ENCODE measurements at regions of chr2 and their contacts with region 1.

Region 1: DNA sequence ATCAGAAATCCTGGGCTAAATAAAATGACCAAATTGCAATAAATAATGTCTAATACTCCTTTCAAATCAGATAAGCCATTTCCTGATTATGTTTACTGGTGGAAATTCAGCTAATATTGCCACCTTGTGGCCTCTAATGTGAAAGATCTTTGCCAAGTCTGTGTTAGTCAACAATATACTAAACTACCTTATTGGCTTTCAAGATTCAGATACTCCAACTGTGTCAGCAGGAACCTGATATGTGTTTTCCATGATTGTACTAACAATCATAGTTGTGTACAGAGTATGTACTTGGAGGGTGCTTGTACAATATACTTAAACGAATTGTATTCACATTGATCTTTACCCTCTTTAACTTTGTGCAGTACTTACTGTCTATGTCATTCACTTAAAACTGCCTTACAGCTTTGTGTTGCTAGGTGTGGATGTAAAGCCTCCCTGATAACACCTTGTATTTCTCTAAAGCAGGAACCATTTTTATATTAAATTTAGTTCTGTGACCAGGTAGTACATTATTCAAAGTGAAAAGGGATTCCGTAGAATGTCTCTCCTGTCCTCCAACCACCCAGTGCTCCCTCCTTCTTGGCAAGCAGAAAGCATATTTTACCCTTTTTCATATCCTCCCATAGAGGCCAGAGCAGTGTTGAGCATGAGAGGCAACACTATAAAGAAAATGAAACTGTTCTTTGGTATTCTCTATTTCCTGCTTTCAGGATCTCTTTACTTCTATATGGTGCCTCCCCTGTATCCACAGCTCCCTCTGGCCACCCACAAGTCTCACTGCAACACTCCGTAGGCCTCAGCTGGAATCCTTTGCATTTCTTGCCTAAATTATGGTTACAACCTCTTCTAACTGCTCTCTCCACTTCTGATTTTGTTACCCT is 75.2 kb upstream of the C2orf15 start:
- DNase-seq: peak; percentile 68
- H3K4me3 Mint-ChIP-seq: no peak overlapping the region
- H3K27ac Mint-ChIP-seq: no peak overlapping the region
- H3K4me1 Mint-ChIP-seq: no peaks in the 10 kb centered on the region
- H3K27me3 Mint-ChIP-seq: no peaks in the 10 kb centered on the region
- CTCF ChIP-seq: peak; percentile 57

Region 2: GRCh38 chr2:98412751-98413458 is 653.4 kb before region 1 on chr2:
- CTCF ChIA-PET with region 1: no interaction called
- POLR2A ChIA-PET with region 1: no interaction called
- intact Hi-C with region 1: loop called (anchors 1 kb)
- DNase-seq: peak; percentile 70
- H3K4me3 Mint-ChIP-seq: no peak overlapping the region
- H3K27ac Mint-ChIP-seq: no peak overlapping the region
- H3K4me1 Mint-ChIP-seq: no peaks in the 10 kb centered on the region
- H3K27me3 Mint-ChIP-seq: peaks cover 13% of the 10 kb centered on the region
- CTCF ChIP-seq: peak; percentile 75

Region 3: DNA sequence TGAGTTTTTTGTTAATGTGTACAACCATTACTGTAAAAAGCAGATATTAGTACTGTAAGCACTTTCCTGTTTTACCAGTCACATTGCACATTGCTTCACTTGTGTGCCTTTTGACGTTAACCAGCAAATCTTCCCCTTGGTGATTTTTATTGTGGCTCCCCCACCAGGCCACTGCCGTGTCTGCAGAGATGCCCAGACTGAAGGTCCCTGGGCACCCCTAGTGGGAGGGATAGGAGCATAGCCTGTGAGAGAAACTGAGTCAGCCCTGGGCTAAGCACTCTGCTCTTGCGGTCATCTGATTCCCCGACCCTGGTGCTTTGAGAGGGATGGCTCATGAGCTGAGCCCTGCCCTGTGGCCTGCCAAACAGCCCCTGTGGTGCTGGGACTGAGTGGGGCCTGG is 548.2 kb before region 1 on chr2:
- CTCF ChIA-PET with region 1: no interaction called
- POLR2A ChIA-PET with region 1: no interaction called
- intact Hi-C with region 1: no loop called
- DNase-seq: peak; percentile 20
- H3K4me3 Mint-ChIP-seq: no peak overlapping the region
- H3K27ac Mint-ChIP-seq: no peak overlapping the region
- H3K4me1 Mint-ChIP-seq: peaks cover 8% of the 10 kb centered on the region
- H3K27me3 Mint-ChIP-seq: no peaks in the 10 kb centered on the region
- CTCF ChIP-seq: no peak

Region 4: GRCh38 chr2:98731041-98731893 is 335.1 kb before region 1 on chr2 and contains the start of gene MGAT4A:
- CTCF ChIA-PET with region 1: interaction called, 3 read pairs
- POLR2A ChIA-PET with region 1: no interaction called
- intact Hi-C with region 1: loop called (anchors 10 kb)
- DNase-seq: peak; percentile 35
- H3K4me3 Mint-ChIP-seq: peak within 1 kb of the TSS; percentile 67
- H3K27ac Mint-ChIP-seq: no peak within 1 kb of the TSS
- H3K4me1 Mint-ChIP-seq: peaks cover 10% of the 10 kb centered on the region
- H3K27me3 Mint-ChIP-seq: no peaks in the 10 kb centered on the region
- CTCF ChIP-seq: no peak
- total RNA-seq, gene MGAT4A: 3.7 and 4.6 TPM in 2 replicates

Region 5: DNA sequence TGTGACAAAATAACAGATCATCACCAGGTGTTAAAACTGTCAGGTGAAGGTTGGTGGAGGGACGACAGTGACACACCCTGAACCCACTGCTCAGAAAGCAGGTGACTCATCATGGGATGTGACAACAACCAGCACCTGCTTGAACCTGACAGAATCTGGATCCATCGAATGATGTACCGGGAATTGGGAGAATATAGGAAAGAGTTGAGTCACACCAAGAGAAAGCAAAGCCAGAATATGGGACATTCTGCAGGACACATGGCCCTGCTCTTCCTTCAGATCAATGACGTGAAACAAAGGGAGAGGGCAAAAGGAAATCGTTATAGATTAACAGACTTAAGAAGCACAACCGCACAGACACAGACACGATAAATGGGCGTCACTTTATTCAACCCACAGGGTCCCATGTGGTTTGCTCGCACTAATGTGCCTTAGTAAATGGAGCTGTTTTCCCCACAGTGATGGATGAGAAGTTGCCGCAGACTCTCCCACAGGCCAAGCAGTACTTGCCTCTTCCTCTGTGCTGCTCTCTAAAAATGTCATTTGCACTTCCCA is 230.4 kb before region 1 on chr2:
- CTCF ChIA-PET with region 1: interaction called, 32 read pairs
- POLR2A ChIA-PET with region 1: interaction called, 3 read pairs
- intact Hi-C with region 1: loop called (anchors 1 kb)
- DNase-seq: no peak
- H3K4me3 Mint-ChIP-seq: no peak overlapping the region
- H3K27ac Mint-ChIP-seq: no peak overlapping the region
- H3K4me1 Mint-ChIP-seq: peaks cover 10% of the 10 kb centered on the region
- H3K27me3 Mint-ChIP-seq: no peaks in the 10 kb centered on the region
- CTCF ChIP-seq: no peak

Region 6: DNA sequence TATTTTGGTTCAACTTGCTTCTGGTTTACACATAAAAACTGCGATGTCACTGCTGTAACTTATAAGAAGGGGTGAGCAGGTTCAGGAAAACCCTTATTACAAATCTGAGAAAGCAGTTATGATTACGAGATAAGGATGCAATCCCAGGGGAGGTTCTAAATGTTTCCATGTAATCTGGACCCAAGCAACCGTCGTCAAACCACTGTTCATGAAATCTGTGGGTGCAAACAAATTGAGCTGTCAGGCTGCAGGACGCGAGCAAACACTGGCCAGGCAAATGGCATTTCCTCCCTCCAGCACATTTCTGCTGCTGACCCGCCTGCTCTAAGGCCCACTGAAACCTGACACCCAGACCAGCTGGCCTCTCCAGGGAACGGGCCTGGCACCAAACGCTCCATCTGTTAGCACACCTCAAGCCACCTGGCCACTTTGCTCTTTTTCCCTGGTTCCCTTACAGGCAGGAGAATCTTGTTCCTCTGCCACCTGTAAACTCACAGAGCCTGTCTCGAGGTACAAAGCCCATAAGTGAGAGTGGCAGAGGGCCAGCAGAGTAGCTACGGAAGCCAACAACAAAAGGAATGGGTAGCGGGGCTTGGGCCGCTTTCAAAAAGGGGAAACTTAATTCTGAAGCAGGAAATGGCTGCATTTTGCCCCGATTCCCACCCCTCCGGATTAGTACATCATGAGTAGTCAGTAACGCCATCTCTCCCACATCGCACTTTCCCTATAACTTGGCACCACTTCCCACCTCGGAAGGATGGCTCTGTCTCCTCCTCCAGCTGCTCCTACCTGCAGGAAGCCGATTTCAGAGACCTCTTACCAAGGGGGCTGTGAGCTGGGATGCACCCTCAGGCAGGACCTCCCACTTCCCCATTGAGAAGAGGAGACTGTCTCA is 156.8 kb before region 1 on chr2:
- CTCF ChIA-PET with region 1: interaction called, 10 read pairs
- POLR2A ChIA-PET with region 1: interaction called, 5 read pairs
- intact Hi-C with region 1: no loop called
- DNase-seq: peak; percentile 74
- H3K4me3 Mint-ChIP-seq: peak overlapping the region; percentile 47
- H3K27ac Mint-ChIP-seq: peak overlapping the region; percentile 86
- H3K4me1 Mint-ChIP-seq: peaks cover 67% of the 10 kb centered on the region
- H3K27me3 Mint-ChIP-seq: no peaks in the 10 kb centered on the region
- CTCF ChIP-seq: no peak

Region 7: GRCh38 chr2:99489761-99490622 is 423.7 kb after region 1 on chr2 and contains the start of gene REV1:
- CTCF ChIA-PET with region 1: no interaction called
- POLR2A ChIA-PET with region 1: no interaction called
- intact Hi-C with region 1: loop called (anchors 5 kb)
- DNase-seq: peak; percentile 92
- H3K4me3 Mint-ChIP-seq: peak within 1 kb of the TSS; percentile 89
- H3K27ac Mint-ChIP-seq: peak within 1 kb of the TSS; percentile 93
- H3K4me1 Mint-ChIP-seq: peaks cover 15% of the 10 kb centered on the region
- H3K27me3 Mint-ChIP-seq: no peaks in the 10 kb centered on the region
- CTCF ChIP-seq: peak; percentile 46
- total RNA-seq, gene REV1: 33.2 and 38.6 TPM in 2 replicates

Measured in MCF 10A (cell line).